Activated B cell treated with CpG ODN at 0.5 μM for 24 hours (primary cell): ENCODE measurements at regions of chr10 and their contacts with region 1.

Region 1: DNA sequence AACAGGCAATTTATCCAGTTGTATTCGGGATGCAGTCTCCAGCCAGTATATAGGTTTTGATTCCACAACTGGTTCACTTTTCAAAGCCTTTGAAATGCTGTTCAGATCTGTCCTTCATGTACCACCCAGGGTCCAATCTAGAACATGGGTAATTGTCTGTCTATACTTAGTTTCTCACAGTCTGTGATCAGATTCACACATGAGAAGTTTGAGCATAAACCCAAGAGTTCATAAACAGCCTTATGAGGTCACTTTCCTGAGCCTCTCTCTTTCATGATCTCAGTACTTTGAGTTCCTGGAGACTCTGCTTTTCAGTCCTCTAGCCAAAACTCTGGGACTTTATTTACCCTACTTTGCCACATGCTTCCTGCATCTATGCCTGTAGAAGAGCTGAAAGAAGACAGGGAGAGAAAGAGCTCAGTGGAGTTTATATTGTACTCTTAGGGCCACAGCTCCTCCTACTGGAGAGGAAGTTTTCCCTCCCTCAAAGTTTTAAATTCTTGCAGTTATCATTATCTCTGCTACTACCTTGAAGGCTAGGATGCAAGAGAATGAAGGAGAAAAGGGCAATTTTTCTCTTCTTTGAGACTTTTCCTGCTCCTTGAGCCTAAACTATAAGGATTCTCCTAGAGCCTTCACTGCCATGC is 172.0 kb downstream of the ZEB1 start:
- DNase-seq: no peak
- ATAC-seq: peak; percentile 45
- H3K4me3 Mint-ChIP-seq: no peak overlapping the region
- H3K27ac Mint-ChIP-seq: no peak overlapping the region
- H3K4me1 Mint-ChIP-seq: no peaks in the 10 kb centered on the region
- H3K27me3 Mint-ChIP-seq: no peaks in the 10 kb centered on the region
- CTCF ChIP-seq: no peak

Region 2: GRCh38 chr10:30557884-30558283 is 933.1 kb before region 1 on chr10:
- CTCF ChIA-PET with region 1: no interaction called
- POLR2A ChIA-PET with region 1: no interaction called
- intact Hi-C with region 1: no loop called
- DNase-seq: no peak
- ATAC-seq: no peak
- H3K4me3 Mint-ChIP-seq: no peak overlapping the region
- H3K27ac Mint-ChIP-seq: no peak overlapping the region
- H3K4me1 Mint-ChIP-seq: peaks cover 2% of the 10 kb centered on the region
- H3K27me3 Mint-ChIP-seq: peaks cover 4% of the 10 kb centered on the region
- CTCF ChIP-seq: no peak

Region 3: DNA sequence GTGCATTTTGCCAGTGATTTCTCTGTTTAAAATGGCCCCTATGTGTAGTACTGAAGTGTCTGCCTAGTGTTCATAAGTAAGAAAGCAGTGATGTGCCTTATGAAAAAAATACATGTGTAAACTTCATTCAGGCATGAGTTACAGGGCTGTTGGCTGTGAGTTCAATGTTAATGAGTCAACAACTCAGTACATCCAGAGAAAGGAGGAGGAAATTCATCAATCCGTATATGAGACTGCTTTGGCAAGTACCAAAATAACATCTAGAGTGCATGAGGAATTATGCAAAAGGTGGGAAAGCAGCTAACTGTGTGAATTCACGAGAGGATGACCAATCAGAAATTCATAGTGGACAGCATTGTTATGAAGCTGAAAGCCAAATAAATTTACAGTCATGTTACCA is 83.6 kb after region 1 on chr10:
- CTCF ChIA-PET with region 1: no interaction called
- POLR2A ChIA-PET with region 1: no interaction called
- intact Hi-C with region 1: no loop called
- DNase-seq: no peak
- ATAC-seq: no peak
- H3K4me3 Mint-ChIP-seq: no peak overlapping the region
- H3K27ac Mint-ChIP-seq: no peak overlapping the region
- H3K4me1 Mint-ChIP-seq: no peaks in the 10 kb centered on the region
- H3K27me3 Mint-ChIP-seq: no peaks in the 10 kb centered on the region
- CTCF ChIP-seq: no peak

Region 4: GRCh38 chr10:31808258-31809218 is 317.6 kb after region 1 on chr10:
- CTCF ChIA-PET with region 1: no interaction called
- POLR2A ChIA-PET with region 1: no interaction called
- intact Hi-C with region 1: loop called (anchors 1 kb)
- DNase-seq: no peak
- ATAC-seq: no peak
- H3K4me3 Mint-ChIP-seq: no peak overlapping the region
- H3K27ac Mint-ChIP-seq: peak overlapping the region; percentile 6
- H3K4me1 Mint-ChIP-seq: peaks cover 7% of the 10 kb centered on the region
- H3K27me3 Mint-ChIP-seq: no peaks in the 10 kb centered on the region
- CTCF ChIP-seq: no peak